ENCODE measurements at regions of chr2 and their contacts with region 1.

Region 1: DNA sequence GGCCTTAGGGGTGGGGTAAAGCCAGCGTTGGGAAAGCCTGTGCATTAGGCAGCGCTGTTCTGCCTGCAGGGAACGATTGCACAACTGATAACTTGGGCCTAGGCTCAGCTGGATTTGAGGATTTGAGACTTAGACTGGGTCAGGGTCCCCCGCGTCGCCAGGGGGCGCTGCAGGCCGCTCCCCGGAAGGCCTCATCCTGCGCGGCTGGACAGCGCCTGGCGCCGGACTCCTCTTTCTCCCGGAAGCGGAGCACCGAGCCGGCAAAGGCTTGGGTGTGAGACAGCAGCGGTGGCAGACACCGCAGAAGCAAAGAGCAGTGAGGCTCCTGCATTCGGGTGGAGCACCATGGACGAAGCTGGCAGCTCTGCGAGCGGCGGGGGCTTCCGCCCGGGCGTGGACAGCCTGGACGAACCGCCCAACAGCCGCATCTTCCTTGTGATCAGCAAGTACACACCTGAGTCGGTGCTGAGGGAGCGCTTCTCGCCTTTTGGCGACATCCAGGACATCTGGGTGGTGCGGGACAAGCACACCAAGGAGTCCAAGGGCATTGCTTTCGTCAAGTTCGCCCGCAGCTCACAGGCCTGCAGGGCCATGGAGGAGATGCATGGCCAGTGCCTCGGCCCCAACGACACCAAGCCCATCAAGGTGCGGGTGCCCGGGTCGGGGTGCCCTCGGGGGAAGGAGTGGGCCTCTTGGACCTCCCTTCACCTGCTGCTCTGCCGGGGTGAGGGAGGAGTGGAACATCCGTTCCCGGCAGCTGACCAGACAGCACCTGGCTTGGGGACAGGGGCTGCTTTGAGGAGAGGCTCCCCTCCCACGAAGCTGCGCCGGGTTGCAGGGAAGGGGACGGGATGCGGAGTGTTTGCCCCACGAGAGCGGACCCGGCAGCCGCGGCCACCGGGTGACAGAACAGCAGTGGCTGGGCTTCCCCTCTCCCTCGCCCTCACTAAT is at the start of gene RBM45:
- DNase-seq: peak; percentile 91 to 98
- H3K4me3 ChIP-seq: peak within 1 kb of the TSS; percentile 70
- CTCF ChIP-seq: peak in 1 of 3 donors; percentile 83
- POLR2A ChIP-seq: no peak
- total RNA-seq, gene RBM45: 4.8 to 9.0 (median 8.4) TPM

Region 2: DNA sequence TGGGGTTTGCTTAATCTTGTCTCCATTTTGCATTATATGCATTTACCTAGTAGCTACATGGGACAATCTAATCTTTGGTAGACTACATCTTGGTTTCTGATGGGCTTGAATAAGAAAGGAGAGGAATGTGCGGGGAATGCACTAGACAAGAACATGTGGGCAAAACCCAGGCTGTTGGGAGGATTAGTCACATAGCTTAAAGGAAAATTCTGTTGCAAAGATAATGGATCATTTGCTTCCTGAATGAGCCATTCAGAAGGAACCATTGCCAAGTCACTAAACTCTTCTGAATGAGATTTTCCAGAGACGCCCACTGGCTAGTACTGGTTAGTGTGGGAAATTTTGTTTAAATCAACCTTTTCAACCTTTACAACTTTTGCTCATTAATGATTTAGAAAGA is 166.7 kb after region 1 on chr2:
- intact Hi-C with region 1: loop called (anchors 10 kb)
- DNase-seq: no peak
- H3K4me3 ChIP-seq: no peak overlapping the region
- CTCF ChIP-seq: no peak
- POLR2A ChIP-seq: no peak

Region 3: GRCh38 chr2:178426388-178426787 is 313.9 kb after region 1 on chr2:
- intact Hi-C with region 1: loop called (anchors 10 kb)
- DNase-seq: no peak
- H3K4me3 ChIP-seq: no peak overlapping the region
- CTCF ChIP-seq: no peak
- POLR2A ChIP-seq: no peak